ENCODE measurements at regions of chr2 and their contacts with region 1.

Region 1: DNA sequence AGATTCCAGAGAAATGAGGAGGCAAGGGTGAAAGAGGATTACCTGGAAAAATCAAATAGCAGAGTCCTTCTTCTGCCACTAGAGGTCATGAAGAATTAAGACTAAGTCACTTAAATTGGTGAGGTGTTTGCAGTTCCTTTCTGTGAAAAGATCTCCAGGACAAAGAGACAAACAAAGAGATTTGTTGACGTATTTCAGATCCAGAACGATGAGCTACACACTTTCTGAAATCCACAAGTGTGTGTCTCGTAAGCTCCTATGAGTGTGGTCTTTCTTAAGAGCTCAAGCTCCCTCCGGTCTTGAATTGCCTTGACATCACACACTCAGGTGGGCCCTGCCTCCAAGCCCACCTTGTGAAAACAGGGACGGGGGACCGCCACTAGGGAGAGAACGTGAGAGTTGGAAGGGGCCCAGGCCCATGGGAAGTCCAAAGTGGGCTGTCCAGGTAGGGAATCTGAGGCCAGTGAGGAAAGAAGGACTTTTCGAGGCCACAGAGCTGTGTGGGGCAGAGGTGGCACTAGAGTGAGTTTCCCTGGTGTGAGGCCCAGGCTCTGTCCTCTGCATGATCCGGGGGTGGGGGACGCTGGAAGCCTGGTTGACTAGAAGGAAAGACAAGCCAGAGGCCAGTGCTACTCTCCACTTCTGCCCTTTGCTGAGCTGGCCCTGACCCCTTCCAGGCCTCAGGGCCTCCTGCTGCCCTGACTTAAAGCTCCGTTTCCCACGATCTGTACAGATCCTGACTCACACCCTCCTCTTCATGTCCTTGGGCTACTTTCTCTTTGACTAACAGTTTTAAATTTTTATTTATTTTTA is 168.1 kb upstream of the NCK2 start:
- DNase-seq: no peak
- ATAC-seq: peak; percentile 66
- H3K4me3 Mint-ChIP-seq: no peak overlapping the region
- H3K27ac Mint-ChIP-seq: peak overlapping the region; percentile 66
- H3K4me1 Mint-ChIP-seq: peaks cover 28% of the 10 kb centered on the region
- H3K27me3 Mint-ChIP-seq: no peaks in the 10 kb centered on the region
- CTCF ChIP-seq: peak; percentile 73

Region 2: DNA sequence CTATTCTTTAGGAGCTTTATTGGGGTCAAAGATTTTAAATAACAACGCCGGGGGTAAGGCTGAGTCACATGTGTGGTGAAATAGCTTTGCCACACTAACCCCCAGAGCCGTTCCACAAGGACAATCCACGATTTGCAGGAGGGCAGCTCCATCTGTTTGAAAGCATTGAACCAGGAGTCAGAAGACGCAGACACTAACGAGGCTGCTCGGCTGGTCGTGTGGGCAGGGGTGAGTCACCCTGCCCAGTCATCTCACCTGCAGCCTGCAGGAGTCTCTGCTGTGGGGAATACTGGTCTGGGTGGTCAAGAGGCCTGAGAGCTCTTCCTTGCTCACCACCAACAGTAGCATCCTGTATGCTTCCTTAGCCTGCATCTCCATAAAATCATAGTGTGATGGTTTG is 18.9 kb after region 1 on chr2:
- CTCF ChIA-PET with region 1: interaction called, 14 read pairs
- POLR2A ChIA-PET with region 1: interaction called, 4 read pairs
- intact Hi-C with region 1: no loop called
- DNase-seq: peak; percentile 35
- ATAC-seq: peak; percentile 67
- H3K4me3 Mint-ChIP-seq: no peak overlapping the region
- H3K27ac Mint-ChIP-seq: no peak overlapping the region
- H3K4me1 Mint-ChIP-seq: peaks cover 35% of the 10 kb centered on the region
- H3K27me3 Mint-ChIP-seq: no peaks in the 10 kb centered on the region
- CTCF ChIP-seq: no peak

Region 3: GRCh38 chr2:106098081-106098480 is 521.4 kb after region 1 on chr2:
- CTCF ChIA-PET with region 1: interaction called, 12 read pairs
- POLR2A ChIA-PET with region 1: no interaction called
- intact Hi-C with region 1: loop called (anchors 5 kb)
- DNase-seq: peak; percentile 57
- ATAC-seq: no peak
- H3K4me3 Mint-ChIP-seq: no peak overlapping the region
- H3K27ac Mint-ChIP-seq: peak overlapping the region; percentile 21
- H3K4me1 Mint-ChIP-seq: peaks cover 43% of the 10 kb centered on the region
- H3K27me3 Mint-ChIP-seq: no peaks in the 10 kb centered on the region
- CTCF ChIP-seq: peak; percentile 46

Measured in activated CD8-positive, alpha-beta T cell treated with anti-CD3 and anti-CD28 coated beads for 36 hours (primary cell).